CD8-positive, alpha-beta T cell (primary cell): ENCODE measurements at regions of chr7 and their contacts with region 1.

Region 1: GRCh38 chr7:100538654-100539435 is at the start of gene AGFG2:
- DNase-seq: peak; percentile 100
- ATAC-seq: peak; percentile 94
- H3K4me3 ChIP-seq: peak within 1 kb of the TSS; percentile 67 to 74
- H3K4me3 Mint-ChIP-seq: peak within 1 kb of the TSS; percentile 99
- H3K27ac ChIP-seq: peak within 1 kb of the TSS; percentile 48 to 61
- H3K27ac Mint-ChIP-seq: peak within 1 kb of the TSS; percentile 84
- H3K4me1 ChIP-seq: peaks cover 40% of the 10 kb centered on the region
- H3K4me1 Mint-ChIP-seq: peaks cover 49% of the 10 kb centered on the region
- H3K27me3 ChIP-seq: no peaks in the 10 kb centered on the region
- H3K27me3 Mint-ChIP-seq: no peaks in the 10 kb centered on the region
- CTCF ChIP-seq: no peak
- total RNA-seq, gene AGFG2: 4.4 to 6.3 TPM

Region 2: DNA sequence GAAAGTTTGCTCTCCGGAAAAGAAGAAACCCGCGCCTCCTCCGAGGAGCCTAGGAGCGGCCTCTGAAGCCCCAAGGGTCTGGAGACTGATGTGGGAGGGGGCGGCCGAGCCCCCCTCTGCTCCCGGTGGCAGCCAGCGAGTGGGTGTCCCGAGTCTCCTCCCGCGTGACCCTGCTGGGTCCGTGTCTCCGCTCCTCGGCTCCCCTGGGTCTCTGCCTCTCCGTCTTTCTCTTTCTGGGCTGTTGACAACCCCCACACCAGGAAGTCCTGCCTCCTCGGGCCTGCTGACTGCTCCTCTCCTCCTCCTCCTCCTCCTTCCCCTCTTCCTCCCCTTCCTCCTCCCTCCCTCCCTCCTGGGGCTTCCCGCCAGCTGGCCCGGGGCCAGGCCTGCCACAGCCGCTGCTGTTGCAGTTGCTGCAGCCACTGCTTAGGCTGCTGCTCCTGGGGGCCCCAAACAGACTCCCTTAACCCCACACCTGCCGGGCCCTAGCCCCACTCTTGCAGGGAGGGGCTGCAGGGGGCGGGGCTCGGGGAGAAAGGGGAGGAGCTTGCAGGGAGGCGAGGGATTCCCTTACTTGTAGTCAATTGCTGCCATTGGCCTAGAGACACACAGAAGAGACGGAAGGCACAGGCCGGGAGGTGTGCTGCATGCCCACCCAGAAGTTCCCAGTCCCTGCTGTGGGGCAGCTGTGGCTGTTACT is 59.7 kb before region 1 on chr7 and contains the start of gene TSC22D4:
- CTCF ChIA-PET with region 1: interaction called, 12 read pairs
- POLR2A ChIA-PET with region 1: no interaction called
- intact Hi-C with region 1: loop called (anchors 1 to 2 kb)
- DNase-seq: peak; percentile 85 to 97 (median 94)
- ATAC-seq: peak; percentile 69
- H3K4me3 ChIP-seq: peak within 1 kb of the TSS; percentile 82 to 96
- H3K4me3 Mint-ChIP-seq: peak within 1 kb of the TSS; percentile 93
- H3K27ac ChIP-seq: peak within 1 kb of the TSS; percentile 72 to 75
- H3K27ac Mint-ChIP-seq: peak within 1 kb of the TSS; percentile 89
- H3K4me1 ChIP-seq: peaks cover 54% of the 10 kb centered on the region
- H3K4me1 Mint-ChIP-seq: peaks cover 44% of the 10 kb centered on the region
- H3K27me3 ChIP-seq: no peaks in the 10 kb centered on the region
- H3K27me3 Mint-ChIP-seq: no peaks in the 10 kb centered on the region
- CTCF ChIP-seq: no peak
- total RNA-seq, gene TSC22D4: 30.7 to 32.3 TPM

Region 3: DNA sequence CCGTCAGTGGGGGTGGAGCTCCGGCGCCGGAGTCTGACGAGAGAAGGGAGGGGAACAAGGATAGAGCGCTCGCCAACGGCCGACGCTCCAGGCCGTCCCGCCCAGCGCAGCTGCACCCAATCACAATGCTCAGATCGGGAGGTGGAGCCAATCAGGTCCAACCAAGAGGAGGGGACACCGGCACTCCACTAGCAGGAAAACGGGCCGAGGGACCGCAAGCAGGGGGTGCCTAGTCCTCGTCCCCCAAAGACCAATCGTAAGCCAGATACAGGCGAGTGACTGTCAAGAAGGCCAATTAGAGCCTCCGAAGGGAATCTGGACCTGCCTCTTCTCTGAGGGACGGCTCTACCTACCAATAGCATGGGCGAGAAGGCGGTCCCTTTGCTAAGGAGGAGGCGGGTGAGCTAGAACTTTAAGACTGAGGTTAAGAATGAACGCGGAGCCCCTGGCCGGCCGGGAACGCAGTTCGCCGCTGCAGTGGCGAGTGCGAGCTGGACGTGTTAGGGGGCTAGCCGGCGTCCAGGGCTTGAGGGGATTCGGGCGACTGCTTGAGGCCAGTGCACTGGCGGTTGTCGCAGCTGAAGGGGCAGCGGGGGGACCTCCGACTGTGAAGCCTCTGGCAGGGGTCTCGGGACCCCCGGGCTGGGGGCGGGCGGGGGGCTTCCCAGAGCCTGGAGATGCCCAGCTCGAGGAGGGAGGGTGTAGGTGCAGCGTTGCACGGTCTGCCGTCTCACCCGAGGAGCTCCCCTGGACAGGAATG is 47.6 kb after region 1 on chr7 and contains the start of gene FBXO24:
- CTCF ChIA-PET with region 1: no interaction called
- POLR2A ChIA-PET with region 1: interaction called, 8 read pairs
- intact Hi-C with region 1: loop called (anchors 1 kb)
- DNase-seq: peak; percentile 98 to 100 (median 99)
- ATAC-seq: peak; percentile 80
- H3K4me3 ChIP-seq: peak within 1 kb of the TSS; percentile 93 to 96
- H3K4me3 Mint-ChIP-seq: peak within 1 kb of the TSS; percentile 96
- H3K27ac ChIP-seq: peak within 1 kb of the TSS; percentile 74 to 94
- H3K27ac Mint-ChIP-seq: peak within 1 kb of the TSS; percentile 57
- H3K4me1 ChIP-seq: peaks cover 22% of the 10 kb centered on the region
- H3K4me1 Mint-ChIP-seq: peaks cover 39% of the 10 kb centered on the region
- H3K27me3 ChIP-seq: no peaks in the 10 kb centered on the region
- H3K27me3 Mint-ChIP-seq: peaks cover 3% of the 10 kb centered on the region
- CTCF ChIP-seq: no peak
- total RNA-seq, gene FBXO24: 0.30 to 0.53 TPM

Region 4: GRCh38 chr7:100691676-100692577 is 153.1 kb after region 1 on chr7:
- CTCF ChIA-PET with region 1: no interaction called
- POLR2A ChIA-PET with region 1: no interaction called
- intact Hi-C with region 1: loop called in 1 of 2 experiments (anchors 1 kb)
- DNase-seq: peak; percentile 63 to 88 (median 82)
- ATAC-seq: peak; percentile 71
- H3K4me3 ChIP-seq: peak overlapping the region in 1 of 2 experiments; percentile 72
- H3K4me3 Mint-ChIP-seq: peak overlapping the region; percentile 94
- H3K27ac ChIP-seq: no peak overlapping the region
- H3K27ac Mint-ChIP-seq: peak overlapping the region; percentile 90
- H3K4me1 ChIP-seq: peaks cover 53% of the 10 kb centered on the region
- H3K4me1 Mint-ChIP-seq: peaks cover 42% of the 10 kb centered on the region
- H3K27me3 ChIP-seq: no peaks in the 10 kb centered on the region
- H3K27me3 Mint-ChIP-seq: no peaks in the 10 kb centered on the region
- CTCF ChIP-seq: peak; percentile 83

Region 5: DNA sequence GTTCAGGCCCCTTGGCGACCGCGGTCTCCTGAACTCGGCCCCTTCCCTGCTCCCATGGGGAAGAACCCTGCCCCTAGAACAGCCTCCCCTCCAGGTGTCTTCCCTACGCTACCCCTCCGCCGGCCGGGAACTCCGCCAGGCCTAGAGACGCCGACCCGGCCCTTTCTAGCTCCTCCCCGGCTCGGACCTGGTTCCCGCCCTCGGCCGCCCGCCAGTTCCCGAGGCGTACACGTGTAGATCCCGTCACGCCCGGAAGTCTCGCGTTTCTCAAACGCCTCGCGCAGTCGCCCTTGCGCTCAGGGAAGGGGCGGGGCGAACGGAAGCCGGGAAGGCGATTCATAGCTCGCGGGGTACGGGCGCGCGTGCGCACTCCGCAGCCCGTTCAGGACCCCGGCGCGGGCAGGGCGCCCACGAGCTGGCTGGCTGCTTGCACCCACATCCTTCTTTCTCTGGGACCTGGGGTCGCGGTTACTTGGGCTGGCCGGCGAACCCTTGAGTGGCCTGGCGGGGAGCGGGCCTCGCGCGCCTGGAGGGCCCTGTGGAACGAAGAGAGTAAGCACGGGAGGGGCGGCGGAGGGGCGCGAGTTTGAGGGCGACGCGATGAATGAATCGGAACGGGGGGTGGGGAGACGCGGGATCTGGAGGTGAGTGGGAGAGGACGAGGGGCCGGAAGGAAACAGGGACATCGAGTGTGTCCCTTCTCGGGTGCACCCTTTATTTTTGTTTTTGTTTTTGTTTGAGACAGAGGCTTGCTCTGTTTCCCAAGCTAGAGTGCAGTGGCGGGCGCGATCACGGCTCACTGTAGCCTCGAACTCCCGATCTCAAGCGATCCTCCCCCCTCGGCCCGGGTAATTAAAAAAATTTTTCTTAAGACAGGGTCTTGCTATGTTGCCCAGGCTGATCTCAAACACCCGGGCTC is 167.2 kb after region 1 on chr7 and contains the start of gene POP7:
- CTCF ChIA-PET with region 1: no interaction called
- POLR2A ChIA-PET with region 1: no interaction called
- intact Hi-C with region 1: no loop called
- DNase-seq: peak; percentile 93 to 99 (median 98)
- ATAC-seq: peak; percentile 95
- H3K4me3 ChIP-seq: peak within 1 kb of the TSS; percentile 80 to 94
- H3K4me3 Mint-ChIP-seq: peak within 1 kb of the TSS; percentile 96
- H3K27ac ChIP-seq: peak within 1 kb of the TSS; percentile 53 to 82
- H3K27ac Mint-ChIP-seq: peak within 1 kb of the TSS; percentile 94
- H3K4me1 ChIP-seq: peaks cover 16% of the 10 kb centered on the region
- H3K4me1 Mint-ChIP-seq: peaks cover 19% of the 10 kb centered on the region
- H3K27me3 ChIP-seq: no peaks in the 10 kb centered on the region
- H3K27me3 Mint-ChIP-seq: peaks cover 2% of the 10 kb centered on the region
- CTCF ChIP-seq: no peak
- total RNA-seq, gene POP7: 9.3 to 11.0 TPM

Region 6: GRCh38 chr7:100889761-100890634 is 351.2 kb after region 1 on chr7:
- CTCF ChIA-PET with region 1: no interaction called
- POLR2A ChIA-PET with region 1: no interaction called
- intact Hi-C with region 1: loop called in 1 of 2 experiments (anchors 2 kb)
- DNase-seq: peak; percentile 79 to 97 (median 91)
- ATAC-seq: peak; percentile 82
- H3K4me3 ChIP-seq: peak overlapping the region; percentile 65 to 90
- H3K4me3 Mint-ChIP-seq: peak overlapping the region; percentile 87
- H3K27ac ChIP-seq: peak overlapping the region; percentile 22 to 44
- H3K27ac Mint-ChIP-seq: peak overlapping the region; percentile 72
- H3K4me1 ChIP-seq: peaks cover 40% of the 10 kb centered on the region
- H3K4me1 Mint-ChIP-seq: peaks cover 42% of the 10 kb centered on the region
- H3K27me3 ChIP-seq: peaks cover 0 to 20% of the 10 kb centered on the region in 2 experiments
- H3K27me3 Mint-ChIP-seq: peaks cover 13% of the 10 kb centered on the region
- CTCF ChIP-seq: no peak